ENCODE measurements at regions of chr6 and their contacts with region 1.

Region 1: GRCh38 chr6:123715006-123715875 is 78.5 kb upstream of the TRDN start:
- DNase-seq: peak in 1 of 3 donors; percentile 12
- ATAC-seq: no peak
- H3K4me3 ChIP-seq: no peak overlapping the region
- H3K4me1 ChIP-seq: no peaks in the 10 kb centered on the region
- CTCF ChIP-seq: no peak

Region 2: GRCh38 chr6:123415844-123416468 is 299.3 kb before region 1 on chr6:
- intact Hi-C with region 1: loop called (anchors 10 kb)
- DNase-seq: peak in 1 of 3 donors; percentile 72
- ATAC-seq: peak; percentile 37
- H3K4me3 ChIP-seq: no peak overlapping the region
- H3K4me1 ChIP-seq: no peaks in the 10 kb centered on the region
- CTCF ChIP-seq: peak; percentile 34

Region 3: DNA sequence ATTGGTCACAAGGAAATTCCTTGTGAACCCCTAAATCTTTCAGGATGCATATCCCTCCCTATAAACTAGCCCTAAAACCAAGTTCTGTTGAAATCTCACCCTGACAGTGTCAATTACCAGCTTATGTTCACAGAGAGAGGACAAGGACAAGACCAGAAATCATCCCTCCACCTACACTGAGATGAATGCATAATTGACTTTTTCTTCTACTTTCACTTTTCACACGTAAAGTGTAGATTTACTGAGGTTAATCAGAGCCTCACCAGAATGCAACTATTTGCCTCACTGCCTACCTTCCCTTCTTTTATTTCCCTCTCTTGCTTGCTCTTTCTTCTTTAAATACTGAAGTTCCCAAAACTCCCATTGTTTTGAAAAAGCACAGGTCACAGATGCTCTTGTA is 73.1 kb after region 1 on chr6:
- intact Hi-C with region 1: no loop called
- DNase-seq: no peak
- ATAC-seq: no peak
- H3K4me3 ChIP-seq: no peak overlapping the region
- H3K4me1 ChIP-seq: no peaks in the 10 kb centered on the region
- CTCF ChIP-seq: no peak

Measured in mucosa of descending colon (tissue), 3 donors.